Endothelial cell of umbilical vein (primary cell): ENCODE measurements at regions of chr4 and their contacts with region 1.

Region 1: GRCh38 chr4:185384930-185385331 is 10.8 kb downstream of the LRP2BP start:
- DNase-seq: peak; percentile 94
- H3K4me3 ChIP-seq: peak overlapping the region in 1 of 3 experiments; percentile 32
- H3K27ac ChIP-seq: peak overlapping the region; percentile 88
- H3K4me1 ChIP-seq: peaks cover 23% of the 10 kb centered on the region
- H3K27me3 ChIP-seq: no peaks in the 10 kb centered on the region
- CTCF ChIP-seq: no peak
- POLR2A ChIP-seq: no peak

Region 2: DNA sequence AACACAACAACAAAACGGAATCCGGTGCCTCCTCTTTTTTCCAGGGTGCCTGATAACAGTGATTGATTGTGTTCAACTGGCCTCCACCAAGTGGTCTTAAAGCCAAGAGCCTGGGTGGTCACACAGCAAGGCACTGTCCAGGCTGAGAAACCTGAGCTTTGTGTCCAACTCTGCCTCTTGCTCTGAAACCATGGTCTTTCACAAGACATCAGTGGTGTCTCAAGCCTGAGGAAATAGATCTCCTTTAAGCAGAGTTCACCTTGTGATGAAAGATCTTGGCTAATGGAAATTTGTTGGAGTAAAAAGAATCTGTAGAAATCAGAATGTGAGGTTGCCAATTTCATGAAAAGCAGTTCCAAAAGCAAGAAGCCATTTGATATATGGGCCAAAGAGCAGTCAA is 511.9 kb before region 1 on chr4:
- CTCF ChIA-PET with region 1: no interaction called
- POLR2A ChIA-PET with region 1: no interaction called
- dilution Hi-C with region 1: no loop called
- intact Hi-C with region 1: no loop called
- DNase-seq: no peak
- H3K4me3 ChIP-seq: no peak overlapping the region
- H3K27ac ChIP-seq: no peak overlapping the region
- H3K4me1 ChIP-seq: no peaks in the 10 kb centered on the region
- H3K27me3 ChIP-seq: peaks cover 3 to 9% of the 10 kb centered on the region in 2 experiments
- CTCF ChIP-seq: no peak
- POLR2A ChIP-seq: no peak

Region 3: DNA sequence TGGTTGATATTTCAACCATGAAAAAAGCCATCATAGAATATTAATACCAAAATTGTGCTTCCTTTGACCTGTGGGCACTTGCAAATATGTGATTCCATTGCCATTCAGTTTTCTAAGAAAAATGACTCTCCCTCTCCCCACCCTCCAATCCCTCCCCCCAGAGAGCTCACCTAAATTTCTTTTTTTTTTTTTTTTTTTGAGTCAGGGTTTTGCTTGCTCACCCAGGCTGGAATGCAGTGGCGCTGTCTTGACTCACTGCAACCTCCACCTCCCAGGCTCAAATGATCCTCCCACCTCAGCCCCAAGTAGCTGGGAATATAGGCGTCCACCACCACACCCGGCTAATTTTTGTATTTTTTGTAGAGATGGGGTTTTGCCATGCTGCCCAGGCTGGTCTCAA is 128.5 kb before region 1 on chr4:
- CTCF ChIA-PET with region 1: no interaction called
- POLR2A ChIA-PET with region 1: no interaction called
- dilution Hi-C with region 1: no loop called
- intact Hi-C with region 1: no loop called
- DNase-seq: no peak
- H3K4me3 ChIP-seq: no peak overlapping the region
- H3K27ac ChIP-seq: no peak overlapping the region
- H3K4me1 ChIP-seq: peaks cover 2% of the 10 kb centered on the region
- H3K27me3 ChIP-seq: no peaks in the 10 kb centered on the region
- CTCF ChIP-seq: no peak
- POLR2A ChIP-seq: no peak

Region 4: DNA sequence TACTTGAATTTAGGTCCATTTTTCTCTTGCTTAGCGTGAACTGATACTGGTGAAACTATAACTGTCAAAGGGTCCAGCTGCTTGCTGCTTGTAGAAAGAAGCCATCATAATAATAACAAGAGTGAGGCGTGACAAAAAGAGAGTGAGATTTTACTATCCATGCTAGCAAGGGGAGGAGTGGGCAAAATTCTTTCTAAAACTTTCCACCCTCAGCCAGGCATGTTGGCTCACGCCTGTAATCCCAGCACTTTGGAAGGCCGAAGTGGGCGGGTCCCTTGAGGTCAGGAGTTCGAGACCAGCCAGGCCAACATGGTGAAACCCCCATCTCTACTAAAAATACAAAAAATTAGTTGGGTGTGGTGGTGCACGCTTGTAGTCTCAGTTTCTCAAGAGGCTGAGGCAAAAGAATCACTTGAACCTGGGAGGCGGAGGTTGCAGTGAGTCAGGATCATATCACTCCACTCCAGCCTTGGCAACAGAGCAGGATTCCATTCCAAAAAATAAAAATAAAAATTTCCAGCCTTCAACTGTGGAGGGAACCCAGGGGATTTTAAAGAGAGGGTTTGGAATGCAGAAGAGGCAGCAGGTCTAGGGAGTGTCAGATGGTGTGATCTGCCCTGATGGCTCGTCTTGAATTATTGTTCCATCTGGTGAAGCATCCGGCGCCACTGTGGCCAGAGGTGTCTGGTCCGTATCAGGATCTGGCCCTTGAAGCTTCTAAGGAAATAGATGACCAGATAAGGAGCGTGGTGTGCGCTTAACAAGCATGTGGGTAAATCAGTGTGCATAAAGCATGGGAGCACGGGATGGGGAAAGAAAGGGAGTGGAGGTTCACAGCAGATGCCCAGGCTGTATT is 41.0 kb before region 1 on chr4:
- CTCF ChIA-PET with region 1: interaction called, 4 read pairs
- POLR2A ChIA-PET with region 1: no interaction called
- dilution Hi-C with region 1: no loop called
- intact Hi-C with region 1: loop called (anchors 1 kb)
- DNase-seq: peak; percentile 57
- H3K4me3 ChIP-seq: no peak overlapping the region
- H3K27ac ChIP-seq: peak overlapping the region; percentile 62
- H3K4me1 ChIP-seq: peaks cover 19% of the 10 kb centered on the region
- H3K27me3 ChIP-seq: no peaks in the 10 kb centered on the region
- CTCF ChIP-seq: no peak
- POLR2A ChIP-seq: no peak

Region 5: DNA sequence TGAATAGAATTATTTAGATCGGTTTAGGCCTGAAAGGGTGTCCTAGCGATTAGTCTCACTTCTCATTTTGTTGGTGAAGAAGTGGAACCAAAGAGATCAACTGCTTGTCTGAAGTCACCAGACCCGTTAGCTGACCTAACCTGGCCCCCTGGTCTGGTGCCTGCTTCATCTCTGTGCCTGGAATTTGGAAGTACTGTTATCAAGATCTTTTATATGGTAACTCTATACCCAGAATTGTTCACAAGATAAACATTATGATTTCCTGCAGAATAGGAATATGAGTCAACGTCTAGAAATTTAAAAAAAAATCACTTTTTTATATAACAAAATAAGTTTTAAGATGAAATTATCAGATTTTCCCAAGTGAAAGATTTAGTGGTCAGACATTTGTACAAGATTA is 26.4 kb before region 1 on chr4:
- CTCF ChIA-PET with region 1: interaction called, 5 read pairs
- POLR2A ChIA-PET with region 1: no interaction called
- dilution Hi-C with region 1: no loop called
- intact Hi-C with region 1: loop called (anchors 1 kb)
- DNase-seq: peak; percentile 92
- H3K4me3 ChIP-seq: no peak overlapping the region
- H3K27ac ChIP-seq: peak overlapping the region; percentile 100
- H3K4me1 ChIP-seq: peaks cover 31% of the 10 kb centered on the region
- H3K27me3 ChIP-seq: no peaks in the 10 kb centered on the region
- CTCF ChIP-seq: no peak
- POLR2A ChIP-seq: no peak

Region 6: DNA sequence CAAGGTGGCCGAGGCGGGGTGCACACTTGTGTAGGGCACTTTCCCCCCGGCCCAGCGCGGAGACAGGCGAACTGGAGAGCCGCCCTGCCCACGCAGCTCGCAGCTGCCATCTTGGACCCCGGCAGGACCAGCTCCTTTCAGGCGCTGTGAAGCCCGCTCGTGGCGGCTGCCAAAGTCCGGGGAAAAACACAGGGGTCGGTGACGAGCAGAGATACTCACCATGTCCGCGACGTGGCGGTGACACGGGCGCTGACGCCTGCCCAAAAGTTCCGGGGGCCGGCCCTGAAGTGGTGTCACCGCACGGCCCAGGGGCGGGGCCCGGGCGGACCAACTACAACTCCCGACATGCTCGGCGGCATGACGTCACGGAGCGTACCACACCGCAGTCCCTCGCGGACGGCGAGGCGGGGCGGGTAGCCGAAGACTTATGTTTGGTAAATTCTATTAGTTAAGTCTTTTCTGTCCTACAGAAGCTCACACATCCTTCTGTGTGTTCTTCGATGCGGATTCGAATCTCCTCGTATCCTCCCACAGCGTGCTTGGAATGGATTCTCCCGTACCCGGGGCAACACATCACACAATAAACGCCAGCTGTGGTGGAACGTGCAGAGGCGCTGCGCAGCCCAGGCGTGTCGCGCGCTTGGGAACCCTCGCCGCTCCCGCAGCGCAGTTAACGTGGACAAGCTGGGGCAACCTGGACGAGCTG is 40.9 kb after region 1 on chr4 and contains the start of gene UFSP2:
- CTCF ChIA-PET with region 1: no interaction called
- POLR2A ChIA-PET with region 1: no interaction called
- dilution Hi-C with region 1: no loop called
- intact Hi-C with region 1: loop called (anchors 1 kb)
- DNase-seq: peak; percentile 93
- H3K4me3 ChIP-seq: peak within 1 kb of the TSS; percentile 59 to 90 (median 69)
- H3K27ac ChIP-seq: peak within 1 kb of the TSS; percentile 96
- H3K4me1 ChIP-seq: peaks cover 8% of the 10 kb centered on the region
- H3K27me3 ChIP-seq: no peaks in the 10 kb centered on the region
- CTCF ChIP-seq: no peak
- POLR2A ChIP-seq: no peak
- total RNA-seq, gene UFSP2: 25.2 and 26.7 TPM in 2 replicates